ENCODE measurements at regions of chr18 and their contacts with region 1.

Region 1: DNA sequence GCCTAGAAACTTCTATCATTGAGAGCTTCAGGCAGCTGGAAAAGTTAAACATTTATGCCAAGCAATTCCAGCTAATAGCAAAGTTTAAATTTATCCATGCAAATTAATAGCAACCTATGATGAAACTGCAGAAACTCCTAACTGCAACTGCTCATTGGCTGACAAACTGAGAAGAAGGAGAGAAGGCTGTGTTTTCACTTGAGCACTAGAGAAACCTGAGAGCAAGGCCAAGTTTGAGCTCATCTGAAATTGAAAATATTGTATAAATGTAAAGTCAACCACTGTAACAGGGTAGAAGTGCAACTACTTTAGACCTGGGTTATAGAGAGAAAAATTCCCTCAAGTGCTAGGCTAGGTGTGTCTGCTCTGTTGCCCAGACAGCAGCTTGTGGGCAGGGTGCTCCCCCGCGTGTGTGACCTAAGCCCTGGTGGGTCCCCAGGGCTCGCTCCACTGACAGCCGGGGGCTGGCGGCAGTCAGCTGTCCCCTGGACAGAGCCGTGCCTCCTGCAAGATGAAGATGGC is 50.2 kb downstream of the CABYR start:
- DNase-seq: no peak
- ATAC-seq: peak in 6 of 8 donors; percentile 24 to 58 (median 46)
- H3K4me3 ChIP-seq: no peak overlapping the region
- H3K27ac ChIP-seq: no peak overlapping the region
- H3K4me1 ChIP-seq: peaks cover 0 to 33% (median 25%) of the 10 kb centered on the region in 9 donors
- H3K27me3 ChIP-seq: no peaks in the 10 kb centered on the region
- CTCF ChIP-seq: no peak

Region 2: GRCh38 chr18:23998811-23999210 is 190.3 kb before region 1 on chr18:
- intact Hi-C with region 1: no loop called
- DNase-seq: no peak
- ATAC-seq: no peak
- H3K4me3 ChIP-seq: no peak overlapping the region
- H3K27ac ChIP-seq: no peak overlapping the region
- H3K4me1 ChIP-seq: peaks cover 0 to 10% (median 6%) of the 10 kb centered on the region in 9 donors
- H3K27me3 ChIP-seq: peaks cover 0 to 13% (median 0%) of the 10 kb centered on the region in 7 donors
- CTCF ChIP-seq: no peak

Region 3: GRCh38 chr18:24262087-24262486 is 73.0 kb after region 1 on chr18:
- intact Hi-C with region 1: loop called in 1 of 10 experiments (anchors 10 kb)
- DNase-seq: no peak
- ATAC-seq: peak in 4 of 8 donors; percentile 62 to 80 (median 76)
- H3K4me3 ChIP-seq: no peak overlapping the region
- H3K27ac ChIP-seq: peak overlapping the region in 5 of 10 donors; percentile 6 to 60 (median 23)
- H3K4me1 ChIP-seq: peaks cover 0 to 56% (median 20%) of the 10 kb centered on the region in 9 donors
- H3K27me3 ChIP-seq: no peaks in the 10 kb centered on the region
- CTCF ChIP-seq: no peak

Region 4: DNA sequence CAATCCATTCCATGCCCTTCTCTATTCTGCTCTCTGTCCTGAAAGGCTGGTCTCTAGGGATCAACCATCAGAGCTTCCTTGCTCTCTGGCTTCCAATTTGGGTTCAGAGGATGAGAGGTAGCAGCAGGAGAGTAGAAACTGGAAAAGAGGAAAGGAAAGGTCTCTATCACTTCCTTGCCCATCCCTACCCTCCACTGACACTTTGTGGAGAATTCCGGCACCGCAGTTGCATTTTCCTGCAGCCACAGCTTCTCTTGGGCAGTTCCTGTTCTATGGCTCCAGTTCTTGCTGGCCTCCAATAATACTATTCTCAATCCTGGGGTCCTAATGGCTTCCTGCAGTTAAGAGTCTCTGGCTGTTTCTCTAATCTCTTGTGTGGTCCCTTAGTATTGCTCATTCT is 224.1 kb after region 1 on chr18:
- intact Hi-C with region 1: loop called in 1 of 10 experiments (anchors 10 kb)
- DNase-seq: peak in 1 of 2 donors; percentile 15
- ATAC-seq: peak in 1 of 8 donors; percentile 38
- H3K4me3 ChIP-seq: no peak overlapping the region
- H3K27ac ChIP-seq: no peak overlapping the region
- H3K4me1 ChIP-seq: no peaks in the 10 kb centered on the region
- H3K27me3 ChIP-seq: peaks cover 0 to 30% (median 19%) of the 10 kb centered on the region in 7 donors
- CTCF ChIP-seq: peak in 8 of 9 donors; percentile 23 to 47 (median 36)